ENCODE measurements at regions of chr5 and their contacts with region 1.

Region 1: GRCh38 chr5:147509710-147510651 is at the start of gene DPYSL3:
- DNase-seq: peak; percentile 72 to 86 (median 82)
- ATAC-seq: peak; percentile 80 to 97 (median 95)
- H3K4me3 ChIP-seq: peak within 1 kb of the TSS; percentile 42 to 84 (median 66)
- H3K27ac ChIP-seq: peak within 1 kb of the TSS; percentile 34 to 91 (median 76)
- H3K4me1 ChIP-seq: peaks cover 0 to 20% (median 8%) of the 10 kb centered on the region in 12 donors
- H3K27me3 ChIP-seq: peaks cover 0 to 25% (median 0%) of the 10 kb centered on the region in 9 donors
- CTCF ChIP-seq: peak in 11 of 12 donors; percentile 6 to 64 (median 36)
- POLR2A ChIP-seq: peak in 1 of 2 donors; percentile 45
- total RNA-seq, gene DPYSL3: 13.7 to 54.7 (median 25.0) TPM

Region 2: DNA sequence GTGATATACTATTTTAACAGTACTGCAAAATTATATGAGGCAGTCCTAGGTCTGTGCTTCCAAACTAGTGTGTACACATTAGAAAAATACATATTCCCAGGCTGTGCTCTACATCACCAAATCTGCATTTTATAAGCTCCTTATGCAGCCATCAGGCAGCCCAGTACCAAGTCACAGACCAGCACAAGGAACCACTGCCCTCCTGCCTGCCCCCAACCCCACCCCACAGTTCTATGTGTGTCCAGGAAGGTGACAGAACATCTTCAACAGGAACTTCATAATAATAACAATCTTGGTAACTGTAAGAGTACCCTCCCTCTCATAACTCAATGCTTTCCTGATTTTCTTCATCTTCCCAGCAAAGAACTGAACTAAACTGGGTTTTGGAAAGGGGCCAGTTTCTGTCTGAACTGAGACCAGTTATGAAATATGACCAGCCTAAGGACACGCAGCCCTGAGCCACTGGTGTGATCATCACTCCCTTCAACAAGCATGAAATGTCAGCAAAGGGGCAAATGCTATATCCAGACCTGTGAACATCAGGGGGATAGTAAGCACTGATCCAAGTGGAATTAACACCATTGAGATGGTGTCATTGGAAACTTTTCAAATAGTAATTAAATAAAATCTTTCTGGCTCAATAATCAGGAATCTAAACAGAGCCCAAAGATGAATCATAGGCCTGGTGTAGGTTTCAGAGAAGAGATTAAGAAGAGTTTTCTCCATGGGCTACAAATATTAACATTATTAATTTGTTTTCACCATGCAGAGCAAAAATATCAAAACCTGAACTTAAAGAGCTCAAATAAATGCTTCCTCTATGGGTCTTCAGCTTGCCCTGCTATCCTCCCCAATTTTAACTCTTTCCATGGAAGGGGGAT is 82.2 kb before region 1 on chr5:
- intact Hi-C with region 1: no loop called
- DNase-seq: no peak
- ATAC-seq: peak in 2 of 4 donors; percentile 52 to 72
- H3K4me3 ChIP-seq: no peak overlapping the region
- H3K27ac ChIP-seq: peak overlapping the region in 1 of 12 donors; percentile 37
- H3K4me1 ChIP-seq: peaks cover 0 to 46% (median 10%) of the 10 kb centered on the region in 12 donors
- H3K27me3 ChIP-seq: no peaks in the 10 kb centered on the region
- CTCF ChIP-seq: no peak
- POLR2A ChIP-seq: no peak

Region 3: GRCh38 chr5:147453875-147454814 is 55.8 kb before region 1 on chr5:
- intact Hi-C with region 1: loop called in 5 of 10 experiments (anchors 1 to 10 kb)
- DNase-seq: peak; percentile 85 to 94 (median 91)
- ATAC-seq: peak; percentile 79 to 89 (median 88)
- H3K4me3 ChIP-seq: peak overlapping the region; percentile 41 to 92 (median 72)
- H3K27ac ChIP-seq: peak overlapping the region; percentile 75 to 95 (median 86)
- H3K4me1 ChIP-seq: peaks cover 0 to 53% (median 18%) of the 10 kb centered on the region in 12 donors
- H3K27me3 ChIP-seq: peaks cover 0 to 9% (median 0%) of the 10 kb centered on the region in 9 donors
- CTCF ChIP-seq: peak; percentile 85 to 96 (median 90)
- POLR2A ChIP-seq: peak in 1 of 2 donors; percentile 33

Region 4: GRCh38 chr5:147464211-147464610 is 45.8 kb before region 1 on chr5:
- intact Hi-C with region 1: loop called in 3 of 10 experiments (anchors 5 to 10 kb)
- DNase-seq: no peak
- ATAC-seq: peak in 2 of 4 donors; percentile 27 to 30
- H3K4me3 ChIP-seq: no peak overlapping the region
- H3K27ac ChIP-seq: no peak overlapping the region
- H3K4me1 ChIP-seq: peaks cover 0 to 33% (median 11%) of the 10 kb centered on the region in 12 donors
- H3K27me3 ChIP-seq: no peaks in the 10 kb centered on the region
- CTCF ChIP-seq: peak in 11 of 12 donors; percentile 30 to 66 (median 42)
- POLR2A ChIP-seq: no peak

Region 5: DNA sequence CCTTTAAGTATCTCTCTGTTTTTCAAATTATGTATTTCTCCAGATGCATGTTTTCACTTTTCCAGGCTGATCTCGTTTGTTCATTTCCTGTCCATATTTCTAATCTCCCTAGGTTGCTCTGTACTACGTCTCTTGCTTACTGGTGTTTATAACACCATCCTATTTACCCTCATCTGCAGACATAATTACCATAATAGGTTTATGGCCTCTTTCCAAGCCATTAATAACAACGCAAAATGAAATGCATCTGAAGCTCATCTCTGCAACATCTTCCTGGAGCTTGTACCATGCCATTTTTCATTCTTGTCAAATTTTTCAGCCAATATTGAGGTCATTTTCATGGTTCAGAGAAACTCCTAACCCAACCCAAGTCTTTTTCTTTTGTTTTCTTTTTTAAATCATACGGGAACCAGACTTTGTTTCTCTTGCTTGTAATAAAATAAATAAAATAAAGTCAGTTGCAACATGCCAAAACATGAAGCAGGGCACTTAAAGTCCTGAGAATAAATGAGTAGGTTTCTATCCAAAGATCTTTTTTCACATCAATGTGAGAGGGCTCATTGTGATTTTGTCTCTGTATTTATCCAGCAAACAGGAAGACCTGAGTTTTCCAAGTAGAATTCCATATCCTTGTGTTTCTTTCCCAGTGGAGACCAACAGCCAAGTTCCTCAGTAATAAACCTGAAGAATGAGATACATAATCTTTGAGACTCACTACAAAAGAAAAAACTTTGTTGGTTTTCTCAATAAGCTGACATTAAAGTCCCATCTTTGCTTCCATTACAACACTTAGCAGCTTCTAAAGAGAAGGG is 37.1 kb before region 1 on chr5:
- intact Hi-C with region 1: loop called in 2 of 10 experiments (anchors 5 kb)
- DNase-seq: no peak
- ATAC-seq: peak in 2 of 4 donors; percentile 37 to 42
- H3K4me3 ChIP-seq: no peak overlapping the region
- H3K27ac ChIP-seq: peak overlapping the region in 9 of 12 donors; percentile 22 to 66 (median 47)
- H3K4me1 ChIP-seq: peaks cover 0 to 28% (median 11%) of the 10 kb centered on the region in 12 donors
- H3K27me3 ChIP-seq: no peaks in the 10 kb centered on the region
- CTCF ChIP-seq: no peak
- POLR2A ChIP-seq: no peak

Region 6: GRCh38 chr5:147522435-147522834 is 12.5 kb after region 1 on chr5:
- intact Hi-C with region 1: no loop called
- DNase-seq: no peak
- ATAC-seq: no peak
- H3K4me3 ChIP-seq: no peak overlapping the region
- H3K27ac ChIP-seq: no peak overlapping the region
- H3K4me1 ChIP-seq: no peaks in the 10 kb centered on the region
- H3K27me3 ChIP-seq: no peaks in the 10 kb centered on the region
- CTCF ChIP-seq: no peak
- POLR2A ChIP-seq: no peak

Region 7: GRCh38 chr5:147576646-147577535 is 66.9 kb after region 1 on chr5:
- intact Hi-C with region 1: loop called in 1 of 10 experiments (anchors 5 kb)
- DNase-seq: peak in 3 of 5 donors; percentile 38 to 44 (median 41)
- ATAC-seq: peak in 3 of 4 donors; percentile 51 to 76 (median 65)
- H3K4me3 ChIP-seq: no peak overlapping the region
- H3K27ac ChIP-seq: no peak overlapping the region
- H3K4me1 ChIP-seq: peaks cover 0 to 7% (median 0%) of the 10 kb centered on the region in 12 donors
- H3K27me3 ChIP-seq: no peaks in the 10 kb centered on the region
- CTCF ChIP-seq: peak; percentile 77 to 89 (median 84)
- POLR2A ChIP-seq: no peak